SK-N-SH (cell line): ENCODE measurements at regions of chr2 and their contacts with region 1.

Region 1: GRCh38 chr2:196729418-196729817 is 70.1 kb downstream of the GTF3C3 start:
- DNase-seq: no peak
- H3K4me3 ChIP-seq: no peak overlapping the region
- H3K27ac ChIP-seq: no peak overlapping the region
- H3K4me1 ChIP-seq: no peaks in the 10 kb centered on the region
- H3K27me3 ChIP-seq: no peaks in the 10 kb centered on the region
- CTCF ChIP-seq: no peak
- EP300 ChIP-seq: no peak
- RAD21 ChIP-seq: no peak

Region 2: GRCh38 chr2:196719110-196719872 is 10.1 kb before region 1 on chr2:
- CTCF ChIA-PET with region 1: interaction called, 12 read pairs
- POLR2A ChIA-PET with region 1: no interaction called
- DNase-seq: peak; percentile 51
- H3K4me3 ChIP-seq: no peak overlapping the region
- H3K27ac ChIP-seq: peak overlapping the region; percentile 60 to 69
- H3K4me1 ChIP-seq: no peaks in the 10 kb centered on the region; a peak in 2 of 4 replicates
- H3K27me3 ChIP-seq: no peaks in the 10 kb centered on the region
- CTCF ChIP-seq: peak; percentile 47
- EP300 ChIP-seq: no peak; a peak in 1 of 4 replicates
- RAD21 ChIP-seq: peak; percentile 45

Region 3: GRCh38 chr2:196742685-196743084 is 13.3 kb after region 1 on chr2:
- CTCF ChIA-PET with region 1: no interaction called
- POLR2A ChIA-PET with region 1: no interaction called
- DNase-seq: no peak
- H3K4me3 ChIP-seq: no peak overlapping the region
- H3K27ac ChIP-seq: no peak overlapping the region
- H3K4me1 ChIP-seq: no peaks in the 10 kb centered on the region
- H3K27me3 ChIP-seq: no peaks in the 10 kb centered on the region
- CTCF ChIP-seq: no peak
- EP300 ChIP-seq: no peak
- RAD21 ChIP-seq: no peak

Region 4: GRCh38 chr2:196849895-196850294 is 120.5 kb after region 1 on chr2:
- CTCF ChIA-PET with region 1: no interaction called
- POLR2A ChIA-PET with region 1: no interaction called
- DNase-seq: peak; percentile 21
- H3K4me3 ChIP-seq: no peak overlapping the region
- H3K27ac ChIP-seq: no peak overlapping the region
- H3K4me1 ChIP-seq: peaks cover 0 to 2% of the 10 kb centered on the region in 2 experiments; a peak in 2 of 4 replicates
- H3K27me3 ChIP-seq: no peaks in the 10 kb centered on the region
- CTCF ChIP-seq: peak; percentile 50
- EP300 ChIP-seq: no peak
- RAD21 ChIP-seq: peak; percentile 64

Region 5: DNA sequence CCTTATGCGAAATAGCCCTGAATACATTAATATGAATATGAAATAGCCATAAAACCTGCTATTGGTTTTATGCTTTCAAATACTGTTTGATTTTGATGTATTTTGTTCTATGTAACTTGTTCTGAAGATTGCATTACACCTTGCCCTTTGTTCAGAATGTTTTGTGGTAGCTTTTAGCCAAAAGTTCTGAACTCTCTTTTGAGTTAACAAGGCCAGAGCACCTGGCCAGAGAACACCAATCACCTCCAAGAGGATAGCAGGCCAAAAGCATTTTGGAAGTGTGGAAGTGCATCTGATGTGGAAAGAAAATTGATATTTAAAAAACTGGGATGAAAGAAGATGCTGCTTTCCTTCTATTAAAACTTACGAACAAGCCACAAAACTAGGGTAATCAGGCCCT is 283.7 kb after region 1 on chr2:
- CTCF ChIA-PET with region 1: no interaction called
- POLR2A ChIA-PET with region 1: no interaction called
- DNase-seq: no peak
- H3K4me3 ChIP-seq: no peak overlapping the region
- H3K27ac ChIP-seq: peak overlapping the region in 1 of 2 experiments; percentile 39; a peak in 1 of 4 replicates
- H3K4me1 ChIP-seq: no peaks in the 10 kb centered on the region; a peak in 2 of 4 replicates
- H3K27me3 ChIP-seq: no peaks in the 10 kb centered on the region
- CTCF ChIP-seq: no peak
- EP300 ChIP-seq: no peak
- RAD21 ChIP-seq: no peak